ENCODE measurements at regions of chr5 and their contacts with region 1.

Region 1: DNA sequence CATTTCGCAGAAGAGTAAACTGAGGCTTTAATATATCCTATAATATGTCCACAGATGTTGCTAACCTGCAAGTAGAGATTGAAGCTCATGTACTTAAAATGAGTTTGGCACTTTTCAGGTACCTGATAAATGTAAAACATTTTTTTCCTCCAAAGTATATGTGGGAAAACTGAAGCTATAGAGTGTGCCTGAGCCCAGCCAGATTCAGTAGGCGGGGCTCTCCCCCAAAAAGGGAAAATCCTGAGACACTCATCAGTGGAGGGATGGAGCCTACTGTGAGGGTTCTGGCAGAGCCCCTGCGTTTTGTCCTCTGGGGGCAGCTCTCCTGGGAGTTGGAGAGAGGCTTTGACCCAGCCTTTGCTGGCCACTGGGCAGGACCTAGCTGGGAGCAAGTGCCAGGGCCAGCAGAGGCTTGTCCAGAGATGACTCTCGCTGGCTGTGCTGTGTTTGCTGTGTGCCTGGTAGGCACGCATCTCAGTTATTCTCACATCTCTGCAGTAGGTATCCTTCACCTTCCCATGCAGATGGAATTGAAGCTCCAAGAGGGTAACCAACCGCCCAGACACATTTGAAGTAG is 81.1 kb upstream of the SPRY4 start:
- DNase-seq: no peak
- ATAC-seq: no peak
- H3K4me3 ChIP-seq: no peak overlapping the region
- H3K27ac ChIP-seq: no peak overlapping the region
- H3K4me1 ChIP-seq: peaks cover 0 to 6% (median 0%) of the 10 kb centered on the region in 12 donors
- H3K27me3 ChIP-seq: no peaks in the 10 kb centered on the region
- CTCF ChIP-seq: no peak
- POLR2A ChIP-seq: no peak

Region 2: DNA sequence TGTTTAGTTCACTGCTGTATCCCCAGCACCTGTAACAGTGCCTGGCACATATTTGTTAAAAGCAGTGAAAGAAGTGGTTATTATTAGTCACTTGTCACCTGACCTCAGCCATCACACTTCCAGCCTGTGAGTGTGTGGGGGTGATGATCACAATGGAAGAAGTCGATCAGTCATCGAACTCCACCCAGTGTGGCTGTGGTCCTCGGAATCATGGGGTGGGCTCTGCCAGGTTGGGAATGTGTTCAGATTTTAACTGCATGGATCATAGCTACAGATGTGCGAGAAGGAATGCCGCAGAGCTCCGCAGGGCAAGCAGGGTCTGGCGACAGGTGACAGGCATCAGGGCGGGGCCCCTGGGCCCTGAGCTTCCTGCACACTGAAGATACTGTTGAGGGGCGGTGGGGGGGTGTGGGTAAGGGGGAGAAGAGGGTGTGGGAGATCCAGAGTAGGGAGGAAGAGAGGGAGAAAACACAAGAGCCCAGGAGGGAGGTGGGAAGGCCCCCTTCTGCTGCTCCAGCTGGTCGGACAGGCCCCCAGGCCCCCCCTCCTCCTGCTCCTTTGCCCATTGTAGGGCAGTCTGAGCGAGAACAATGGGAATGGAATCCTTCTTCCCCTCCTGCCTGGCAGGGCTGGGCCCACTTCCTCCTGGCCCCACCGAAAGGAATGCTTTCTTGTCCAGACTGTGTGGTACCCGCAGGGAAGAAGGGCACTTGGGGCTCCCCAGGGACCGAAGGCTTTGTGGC is 170.7 kb before region 1 on chr5:
- intact Hi-C with region 1: no loop called
- DNase-seq: no peak
- ATAC-seq: peak in 2 of 4 donors; percentile 20 to 33
- H3K4me3 ChIP-seq: no peak overlapping the region
- H3K27ac ChIP-seq: no peak overlapping the region
- H3K4me1 ChIP-seq: peaks cover 0 to 10% (median 0%) of the 10 kb centered on the region in 12 donors
- H3K27me3 ChIP-seq: no peaks in the 10 kb centered on the region
- CTCF ChIP-seq: no peak
- POLR2A ChIP-seq: no peak

Region 3: GRCh38 chr5:142420561-142421227 is 14.8 kb after region 1 on chr5:
- intact Hi-C with region 1: loop called in 1 of 10 experiments (anchors 1 kb)
- DNase-seq: no peak
- ATAC-seq: no peak
- H3K4me3 ChIP-seq: no peak overlapping the region
- H3K27ac ChIP-seq: no peak overlapping the region
- H3K4me1 ChIP-seq: peaks cover 0 to 33% (median 16%) of the 10 kb centered on the region in 12 donors
- H3K27me3 ChIP-seq: no peaks in the 10 kb centered on the region
- CTCF ChIP-seq: no peak
- POLR2A ChIP-seq: no peak

Region 4: GRCh38 chr5:142542906-142543305 is 137.0 kb after region 1 on chr5:
- intact Hi-C with region 1: no loop called
- DNase-seq: peak in 2 of 5 donors; percentile 31 to 49
- ATAC-seq: peak; percentile 53 to 86 (median 83)
- H3K4me3 ChIP-seq: no peak overlapping the region
- H3K27ac ChIP-seq: peak overlapping the region; percentile 63 to 89 (median 80)
- H3K4me1 ChIP-seq: peaks cover 0 to 57% (median 34%) of the 10 kb centered on the region in 12 donors
- H3K27me3 ChIP-seq: no peaks in the 10 kb centered on the region
- CTCF ChIP-seq: peak in 7 of 12 donors; percentile 16 to 53 (median 38)
- POLR2A ChIP-seq: no peak

Region 5: GRCh38 chr5:142888469-142889085 is 482.7 kb after region 1 on chr5:
- intact Hi-C with region 1: no loop called
- DNase-seq: no peak
- ATAC-seq: peak; percentile 21 to 66 (median 60)
- H3K4me3 ChIP-seq: no peak overlapping the region
- H3K27ac ChIP-seq: no peak overlapping the region
- H3K4me1 ChIP-seq: peaks cover 0 to 47% (median 18%) of the 10 kb centered on the region in 12 donors
- H3K27me3 ChIP-seq: no peaks in the 10 kb centered on the region
- CTCF ChIP-seq: peak; percentile 68 to 87 (median 79)
- POLR2A ChIP-seq: no peak

Region 6: DNA sequence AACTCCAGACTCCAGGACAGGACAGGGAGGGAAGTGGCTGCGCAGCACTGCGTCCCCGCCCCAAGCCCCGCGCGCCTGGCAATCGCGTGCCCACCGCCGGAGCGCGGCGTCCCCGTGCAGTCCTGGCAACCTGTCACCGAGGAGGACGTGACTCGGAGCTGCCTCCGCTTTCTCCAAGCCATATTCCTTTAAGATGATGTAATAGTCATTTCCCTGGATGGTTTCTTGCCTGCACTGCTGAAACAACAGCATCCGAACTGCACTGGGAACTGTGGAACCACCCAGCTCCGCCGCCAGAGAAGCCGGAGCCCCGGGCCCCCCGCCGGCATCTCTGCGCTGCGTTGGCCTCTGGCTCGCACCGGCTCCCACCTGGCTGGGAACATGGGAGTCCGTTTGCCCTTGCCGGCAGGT is 1799.2 kb after region 1 on chr5:
- intact Hi-C with region 1: no loop called
- DNase-seq: peak in 1 of 5 donors; percentile 27
- ATAC-seq: peak in 2 of 4 donors; percentile 26 to 65
- H3K4me3 ChIP-seq: peak overlapping the region in 6 of 12 donors; percentile 1 to 36 (median 19)
- H3K27ac ChIP-seq: no peak overlapping the region
- H3K4me1 ChIP-seq: peaks cover 0 to 16% (median 5%) of the 10 kb centered on the region in 12 donors
- H3K27me3 ChIP-seq: peaks cover 9 to 74% (median 40%) of the 10 kb centered on the region in 9 donors
- CTCF ChIP-seq: no peak
- POLR2A ChIP-seq: no peak